CD4-positive, alpha-beta memory T cell (primary cell): ENCODE measurements at regions of chr2 and their contacts with region 1.

Region 1: GRCh38 chr2:199911052-199911876 is at the start of gene C2orf69:
- DNase-seq: peak; percentile 86 to 90 (median 86)
- H3K4me3 ChIP-seq: peak within 1 kb of the TSS; percentile 55 to 80
- H3K4me3 Mint-ChIP-seq: peak within 1 kb of the TSS; percentile 93 to 99 (median 96)
- H3K27ac ChIP-seq: peak within 1 kb of the TSS; percentile 87
- H3K27ac Mint-ChIP-seq: peak within 1 kb of the TSS; percentile 90 to 98 (median 97)
- H3K4me1 ChIP-seq: peaks cover 32% of the 10 kb centered on the region
- H3K4me1 Mint-ChIP-seq: peaks cover 24 to 45% (median 38%) of the 10 kb centered on the region in 4 donors
- H3K27me3 ChIP-seq: peaks cover 5% of the 10 kb centered on the region
- H3K27me3 Mint-ChIP-seq: peaks cover 0 to 1% of the 10 kb centered on the region in 2 donors
- total RNA-seq, gene C2orf69: 14.4 to 14.7 TPM

Region 2: GRCh38 chr2:199850718-199851500 is 60.4 kb before region 1 on chr2 and contains the start of gene FTCDNL1:
- CTCF ChIA-PET with region 1: interaction called, 3 read pairs
- POLR2A ChIA-PET with region 1: no interaction called
- intact Hi-C with region 1: loop called (anchors 1 kb)
- DNase-seq: peak; percentile 67 to 75 (median 71)
- H3K4me3 ChIP-seq: peak within 1 kb of the TSS; percentile 53 to 73
- H3K4me3 Mint-ChIP-seq: peak within 1 kb of the TSS; percentile 93 to 100 (median 98)
- H3K27ac ChIP-seq: peak within 1 kb of the TSS; percentile 23
- H3K27ac Mint-ChIP-seq: peak within 1 kb of the TSS; percentile 57 to 96 (median 92)
- H3K4me1 ChIP-seq: peaks cover 10% of the 10 kb centered on the region
- H3K4me1 Mint-ChIP-seq: peaks cover 3 to 10% (median 7%) of the 10 kb centered on the region in 4 donors
- H3K27me3 ChIP-seq: no peaks in the 10 kb centered on the region
- H3K27me3 Mint-ChIP-seq: no peaks in the 10 kb centered on the region
- total RNA-seq, gene FTCDNL1: 1.9 to 2.3 TPM

Region 3: GRCh38 chr2:199955339-199956261 is 44.3 kb after region 1 on chr2 and contains the starts of genes MAIP1 and TYW5:
- CTCF ChIA-PET with region 1: no interaction called
- POLR2A ChIA-PET with region 1: interaction called, 5 read pairs
- intact Hi-C with region 1: loop called (anchors 5 kb)
- DNase-seq: peak; percentile 77 to 84 (median 82)
- H3K4me3 ChIP-seq: peak within 1 kb of the TSS; percentile 81 to 97
- H3K4me3 Mint-ChIP-seq: peak within 1 kb of the TSS; percentile 97 to 99 (median 98)
- H3K27ac ChIP-seq: peak within 1 kb of the TSS; percentile 71
- H3K27ac Mint-ChIP-seq: peak within 1 kb of the TSS; percentile 93 to 96 (median 95)
- H3K4me1 ChIP-seq: peaks cover 53% of the 10 kb centered on the region
- H3K4me1 Mint-ChIP-seq: peaks cover 29 to 73% (median 50%) of the 10 kb centered on the region in 4 donors
- H3K27me3 ChIP-seq: no peaks in the 10 kb centered on the region
- H3K27me3 Mint-ChIP-seq: no peaks in the 10 kb centered on the region
- total RNA-seq, gene MAIP1: 13.1 to 15.9 TPM
- total RNA-seq, gene TYW5: 11.0 to 11.6 TPM